ENCODE measurements at regions of chr11 and their contacts with region 1.

Region 1: DNA sequence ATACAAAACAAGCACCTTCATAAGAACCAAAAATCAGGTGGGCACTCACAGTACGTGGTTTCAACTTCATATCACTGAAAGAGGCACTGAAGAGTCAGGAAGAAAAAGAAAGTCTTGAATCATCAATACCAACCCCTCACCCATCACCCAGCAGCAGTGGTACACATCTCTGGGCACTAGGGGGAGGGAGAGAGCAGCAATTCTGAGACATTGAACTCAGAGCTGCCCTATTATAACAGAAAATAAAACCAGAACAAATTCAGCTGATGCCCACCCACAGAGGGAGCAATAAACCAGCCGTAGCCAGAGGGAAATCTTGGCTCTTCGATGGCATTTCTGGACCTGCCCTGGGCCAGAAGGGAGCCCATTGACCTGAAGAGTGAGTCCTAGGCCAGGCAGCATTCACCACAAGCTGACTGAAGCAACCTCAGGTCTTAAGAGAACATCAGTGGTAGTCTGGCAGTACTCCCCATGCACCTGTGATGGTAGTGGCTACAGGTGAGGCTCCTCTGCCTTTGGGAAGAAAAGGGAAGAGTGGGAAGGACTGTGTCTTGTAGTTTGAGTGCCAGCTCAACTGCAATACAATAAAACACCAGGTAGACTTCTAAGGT is 42.2 kb upstream of the FAM181B start:
- DNase-seq: peak; percentile 50 to 83
- H3K4me3 ChIP-seq: no peak overlapping the region
- H3K27ac ChIP-seq: no peak overlapping the region
- H3K4me1 ChIP-seq: no peaks in the 10 kb centered on the region
- H3K27me3 ChIP-seq: no peaks in the 10 kb centered on the region
- CTCF ChIP-seq: peak; percentile 77 to 88 (median 79)
- EP300 ChIP-seq: no peak
- POLR2A ChIP-seq: no peak
- RAD21 ChIP-seq: peak; percentile 73 to 76

Region 2: DNA sequence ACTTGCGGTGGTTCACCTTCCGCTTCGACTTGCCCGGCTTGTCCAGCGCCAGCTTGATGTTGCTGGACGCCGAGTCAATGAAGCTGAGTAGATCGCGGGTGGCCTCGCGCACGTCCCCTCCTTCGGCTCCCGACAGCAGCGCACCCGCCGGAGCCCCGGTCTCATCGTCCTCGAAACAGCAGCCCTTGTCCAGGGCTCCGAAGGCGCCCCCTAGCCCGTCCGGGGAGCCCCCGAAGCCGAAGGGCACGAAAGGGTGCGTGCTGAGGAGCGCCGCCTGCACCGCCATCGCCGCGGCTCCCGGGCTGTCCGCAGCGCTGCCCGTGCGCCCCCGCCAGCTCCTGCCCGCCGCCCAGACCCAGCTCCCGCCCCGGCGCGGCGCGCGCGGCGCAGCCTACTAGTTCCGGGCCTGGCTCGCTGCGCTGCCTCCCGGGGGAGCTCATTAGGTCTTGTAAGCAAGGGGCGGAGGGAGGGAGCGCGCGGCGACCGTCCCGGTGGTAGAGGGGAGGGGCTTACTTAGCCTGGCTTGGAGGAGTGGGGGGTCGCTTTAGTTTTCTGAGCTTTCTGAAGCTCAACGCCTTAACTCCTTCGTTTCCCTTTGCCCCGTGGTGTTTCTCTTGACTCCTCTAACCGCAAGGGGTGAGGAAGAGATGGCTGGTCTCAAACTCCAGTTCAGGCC is 42.3 kb before region 1 on chr11 and contains the start of gene FAM181B:
- CTCF ChIA-PET with region 1: interaction called, 13 read pairs
- POLR2A ChIA-PET with region 1: no interaction called
- DNase-seq: peak; percentile 71 to 85
- H3K4me3 ChIP-seq: peak within 1 kb of the TSS; percentile 50 to 86 (median 58)
- H3K27ac ChIP-seq: no peak within 1 kb of the TSS
- H3K4me1 ChIP-seq: peaks cover 2 to 15% (median 6%) of the 10 kb centered on the region in 4 experiments; a peak in 5 of 7 replicates
- H3K27me3 ChIP-seq: peaks cover 11 to 41% (median 36%) of the 10 kb centered on the region in 4 experiments
- CTCF ChIP-seq: no peak
- EP300 ChIP-seq: 0 out of 3 replicates have a peak, but pooled peaks of 1 of the 2 experiments have one; percentile 24
- POLR2A ChIP-seq: no peak
- RAD21 ChIP-seq: no peak
- total RNA-seq, gene FAM181B: 0.37 and 0.42 TPM in 2 replicates

Region 3: GRCh38 chr11:82754410-82754809 is 21.4 kb before region 1 on chr11:
- CTCF ChIA-PET with region 1: interaction called, 10 read pairs
- POLR2A ChIA-PET with region 1: no interaction called
- DNase-seq: no peak
- H3K4me3 ChIP-seq: no peak overlapping the region
- H3K27ac ChIP-seq: no peak overlapping the region
- H3K4me1 ChIP-seq: peaks cover 0 to 8% (median 1%) of the 10 kb centered on the region in 4 experiments; a peak in 3 of 7 replicates
- H3K27me3 ChIP-seq: no peaks in the 10 kb centered on the region
- CTCF ChIP-seq: no peak
- EP300 ChIP-seq: no peak
- POLR2A ChIP-seq: no peak
- RAD21 ChIP-seq: no peak

Region 4: GRCh38 chr11:82765466-82766034 is 10.3 kb before region 1 on chr11:
- CTCF ChIA-PET with region 1: interaction called, 18 read pairs
- POLR2A ChIA-PET with region 1: no interaction called
- DNase-seq: no peak
- H3K4me3 ChIP-seq: no peak overlapping the region
- H3K27ac ChIP-seq: no peak overlapping the region
- H3K4me1 ChIP-seq: no peaks in the 10 kb centered on the region
- H3K27me3 ChIP-seq: no peaks in the 10 kb centered on the region
- CTCF ChIP-seq: no peak
- EP300 ChIP-seq: no peak
- POLR2A ChIP-seq: no peak
- RAD21 ChIP-seq: no peak

Region 5: DNA sequence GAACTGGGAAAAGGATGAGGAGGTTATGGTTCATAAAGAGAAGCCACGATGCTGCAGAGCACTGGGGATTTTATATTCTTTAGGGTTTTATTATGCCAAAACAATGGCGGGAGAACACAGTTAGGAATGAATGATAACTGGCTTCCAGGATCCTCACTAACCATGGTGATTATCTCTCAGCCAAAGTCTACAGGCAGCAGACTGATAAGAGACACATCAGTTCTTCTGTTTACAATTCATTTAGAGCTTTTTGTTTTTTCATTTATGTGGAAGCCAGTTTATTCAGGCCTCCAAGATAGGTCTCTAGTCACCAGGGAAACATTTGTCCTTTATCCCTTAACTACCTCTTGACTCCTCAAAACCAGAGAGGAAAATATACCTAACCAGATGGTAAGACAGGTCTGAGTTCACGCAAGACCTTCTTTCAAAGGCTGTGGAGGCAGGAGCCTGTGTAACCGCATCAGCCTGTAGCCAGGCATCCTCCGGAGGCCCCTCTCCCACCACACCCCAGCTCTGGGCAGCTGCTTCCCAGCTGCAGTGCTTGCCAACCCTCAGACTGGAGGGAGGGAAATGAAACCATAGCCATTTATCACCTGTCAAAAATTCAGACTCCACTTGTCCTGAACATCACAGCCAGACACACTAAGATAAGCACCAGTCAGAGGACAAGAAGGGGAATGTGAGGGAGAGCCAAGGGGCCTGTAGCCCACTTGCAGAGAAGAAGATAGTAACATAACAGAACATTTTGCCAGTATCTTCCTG is 15.1 kb after region 1 on chr11:
- CTCF ChIA-PET with region 1: interaction called, 33 read pairs
- POLR2A ChIA-PET with region 1: no interaction called
- DNase-seq: no peak
- H3K4me3 ChIP-seq: no peak overlapping the region
- H3K27ac ChIP-seq: no peak overlapping the region
- H3K4me1 ChIP-seq: peaks cover 0 to 2% (median 0%) of the 10 kb centered on the region in 4 experiments; a peak in 1 of 7 replicates
- H3K27me3 ChIP-seq: no peaks in the 10 kb centered on the region
- CTCF ChIP-seq: no peak
- EP300 ChIP-seq: no peak
- POLR2A ChIP-seq: no peak
- RAD21 ChIP-seq: no peak

Region 6: DNA sequence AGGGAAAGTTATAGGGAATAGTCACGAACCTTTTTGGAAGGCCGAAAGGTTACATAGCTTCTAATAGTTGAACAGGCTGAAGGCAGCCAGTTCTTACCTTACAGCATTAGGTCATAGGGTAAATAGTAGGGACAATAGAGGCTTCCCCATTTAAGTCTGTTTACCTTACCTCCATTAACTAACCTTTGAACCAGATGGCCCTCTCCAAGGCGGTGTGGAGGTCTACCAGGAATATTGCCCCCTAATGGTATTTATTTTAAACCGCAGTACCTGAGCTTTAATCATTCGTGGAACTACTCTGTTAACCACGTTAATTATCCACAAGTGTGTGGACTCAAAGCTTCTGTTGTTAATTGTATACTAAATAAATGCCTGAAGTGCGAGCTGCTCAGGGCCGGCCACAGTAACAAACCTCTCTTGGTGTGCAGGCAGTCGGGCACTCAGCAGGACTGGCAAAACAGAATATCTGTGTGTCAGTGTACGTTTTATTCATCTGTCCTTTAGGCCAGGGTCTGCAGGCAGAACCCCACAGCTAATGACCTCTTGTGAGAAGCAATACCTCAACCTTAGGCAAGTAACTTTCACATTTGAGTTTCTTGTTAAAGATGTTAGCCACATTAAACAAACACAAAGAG is 42.7 kb after region 1 on chr11:
- CTCF ChIA-PET with region 1: interaction called, 13 read pairs
- POLR2A ChIA-PET with region 1: no interaction called
- DNase-seq: no peak
- H3K4me3 ChIP-seq: no peak overlapping the region
- H3K27ac ChIP-seq: no peak overlapping the region
- H3K4me1 ChIP-seq: peaks cover 2 to 4% (median 4%) of the 10 kb centered on the region in 4 experiments; a peak in 4 of 7 replicates
- H3K27me3 ChIP-seq: peaks cover 0 to 1% (median 0%) of the 10 kb centered on the region in 4 experiments; a peak in 1 of 7 replicates
- CTCF ChIP-seq: peak in 1 of 3 experiments; percentile 30; a peak in 1 of 4 replicates
- EP300 ChIP-seq: no peak
- POLR2A ChIP-seq: no peak
- RAD21 ChIP-seq: peak in 1 of 2 experiments; percentile 27; a peak in 1 of 4 replicates

Region 7: DNA sequence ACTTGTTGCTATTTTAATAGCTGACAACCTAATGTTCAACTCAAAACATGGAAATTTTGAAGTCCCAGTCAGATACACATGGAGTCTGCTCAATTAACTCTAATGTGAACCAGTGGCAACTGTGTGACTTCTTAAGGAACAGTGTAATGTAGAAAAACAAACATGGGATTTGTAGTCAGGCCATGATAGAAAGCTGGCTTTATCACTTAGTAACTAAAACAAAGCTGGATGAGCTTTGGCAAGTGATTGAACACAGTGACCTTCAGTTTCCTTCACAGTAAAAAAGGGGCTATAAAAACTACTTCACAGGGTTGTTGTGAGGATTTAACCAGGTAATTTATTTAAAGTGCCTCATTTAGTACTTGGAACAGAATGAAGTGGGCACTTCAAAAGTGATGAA is 61.8 kb after region 1 on chr11:
- CTCF ChIA-PET with region 1: interaction called, 10 read pairs
- POLR2A ChIA-PET with region 1: no interaction called
- DNase-seq: no peak
- H3K4me3 ChIP-seq: no peak overlapping the region
- H3K27ac ChIP-seq: no peak overlapping the region
- H3K4me1 ChIP-seq: no peaks in the 10 kb centered on the region
- H3K27me3 ChIP-seq: no peaks in the 10 kb centered on the region
- CTCF ChIP-seq: no peak
- EP300 ChIP-seq: no peak
- POLR2A ChIP-seq: no peak
- RAD21 ChIP-seq: no peak